ENCODE measurements at regions of chr6 and their contacts with region 1.

Region 1: DNA sequence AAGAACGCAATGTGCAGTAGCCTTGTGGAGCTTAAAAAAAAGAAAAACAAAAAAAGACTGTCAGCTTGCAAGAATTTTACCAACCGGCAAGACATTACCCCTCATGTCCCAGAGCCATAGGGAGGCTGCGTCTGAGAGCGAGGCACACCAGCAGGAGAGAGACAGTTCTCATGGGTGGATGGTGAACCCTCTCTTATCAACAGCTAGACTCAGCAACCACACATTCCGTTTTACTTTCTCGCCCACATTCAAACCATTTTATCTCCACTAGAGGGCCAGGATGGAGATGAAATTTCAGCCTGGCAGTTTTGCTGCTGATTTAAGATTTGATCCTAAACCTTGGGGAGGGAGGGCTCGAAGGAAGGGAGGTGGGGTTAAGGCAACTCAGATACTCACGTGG is 247.0 kb downstream of the ATXN1 start:
- DNase-seq: peak in 5 of 9 experiments; percentile 19 to 68 (median 26)
- ATAC-seq: peak; percentile 37
- H3K4me3 ChIP-seq: no peak overlapping the region
- H3K4me3 Mint-ChIP-seq: no peak overlapping the region
- H3K27ac ChIP-seq: no peak overlapping the region
- H3K27ac Mint-ChIP-seq: peak overlapping the region; percentile 73
- H3K4me1 ChIP-seq: peaks cover 43% of the 10 kb centered on the region
- H3K4me1 Mint-ChIP-seq: peaks cover 64% of the 10 kb centered on the region
- H3K27me3 ChIP-seq: no peaks in the 10 kb centered on the region
- H3K27me3 Mint-ChIP-seq: no peaks in the 10 kb centered on the region
- CTCF ChIP-seq: no peak

Region 2: DNA sequence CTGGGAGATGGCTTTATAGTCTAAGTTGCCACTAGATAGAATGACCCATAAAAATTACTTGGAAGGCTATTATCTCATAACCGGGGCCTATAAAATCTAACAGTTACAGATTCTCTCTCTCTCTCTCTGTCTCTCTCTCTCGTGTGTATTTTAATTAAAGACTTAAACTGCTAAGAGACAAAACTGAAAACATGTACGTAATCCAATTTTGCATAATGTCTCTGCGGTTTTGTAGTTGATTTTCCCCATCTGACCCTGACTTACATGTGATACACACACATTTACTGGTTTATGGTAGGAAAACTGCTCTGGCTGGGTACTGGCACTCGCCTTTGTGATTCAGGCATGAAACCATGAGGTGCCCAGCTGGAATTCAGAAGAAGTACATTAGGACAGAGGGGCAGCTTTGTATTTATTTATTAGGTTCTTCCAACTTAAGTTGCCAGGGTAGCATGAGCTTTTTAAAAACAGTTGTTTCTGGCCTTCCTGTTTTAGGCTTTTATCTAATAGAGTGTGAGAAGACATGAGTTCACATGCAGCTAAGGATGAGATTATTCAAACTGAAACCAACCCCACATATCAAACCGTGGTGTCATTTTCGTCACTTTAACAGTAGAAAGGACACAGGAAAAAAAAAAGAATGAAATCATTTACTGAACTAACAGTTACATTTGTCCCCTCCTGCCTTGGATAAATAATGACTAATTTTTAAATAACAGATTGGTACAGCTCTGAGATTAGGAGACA is 93.4 kb before region 1 on chr6:
- CTCF ChIA-PET with region 1: interaction called, 6 read pairs
- POLR2A ChIA-PET with region 1: no interaction called
- intact Hi-C with region 1: loop called in 1 of 2 experiments (anchors 5 kb)
- DNase-seq: peak in 6 of 9 experiments; percentile 15 to 89 (median 43)
- ATAC-seq: peak; percentile 77
- H3K4me3 ChIP-seq: peak overlapping the region in 1 of 2 experiments; percentile 3
- H3K4me3 Mint-ChIP-seq: peak overlapping the region; percentile 78
- H3K27ac ChIP-seq: peak overlapping the region; percentile 62 to 95
- H3K27ac Mint-ChIP-seq: peak overlapping the region; percentile 98
- H3K4me1 ChIP-seq: peaks cover 27% of the 10 kb centered on the region
- H3K4me1 Mint-ChIP-seq: peaks cover 42% of the 10 kb centered on the region
- H3K27me3 ChIP-seq: no peaks in the 10 kb centered on the region
- H3K27me3 Mint-ChIP-seq: no peaks in the 10 kb centered on the region
- CTCF ChIP-seq: no peak

Region 3: GRCh38 chr6:16438718-16439591 is 75.3 kb before region 1 on chr6:
- CTCF ChIA-PET with region 1: interaction called, 3 read pairs
- POLR2A ChIA-PET with region 1: no interaction called
- intact Hi-C with region 1: loop called in 1 of 2 experiments (anchors 5 kb)
- DNase-seq: peak in 2 of 9 experiments; percentile 52 to 65
- ATAC-seq: no peak
- H3K4me3 ChIP-seq: no peak overlapping the region
- H3K4me3 Mint-ChIP-seq: no peak overlapping the region
- H3K27ac ChIP-seq: peak overlapping the region in 1 of 2 experiments; percentile 67
- H3K27ac Mint-ChIP-seq: peak overlapping the region; percentile 47
- H3K4me1 ChIP-seq: peaks cover 28% of the 10 kb centered on the region
- H3K4me1 Mint-ChIP-seq: peaks cover 52% of the 10 kb centered on the region
- H3K27me3 ChIP-seq: no peaks in the 10 kb centered on the region
- H3K27me3 Mint-ChIP-seq: no peaks in the 10 kb centered on the region
- CTCF ChIP-seq: no peak

Region 4: DNA sequence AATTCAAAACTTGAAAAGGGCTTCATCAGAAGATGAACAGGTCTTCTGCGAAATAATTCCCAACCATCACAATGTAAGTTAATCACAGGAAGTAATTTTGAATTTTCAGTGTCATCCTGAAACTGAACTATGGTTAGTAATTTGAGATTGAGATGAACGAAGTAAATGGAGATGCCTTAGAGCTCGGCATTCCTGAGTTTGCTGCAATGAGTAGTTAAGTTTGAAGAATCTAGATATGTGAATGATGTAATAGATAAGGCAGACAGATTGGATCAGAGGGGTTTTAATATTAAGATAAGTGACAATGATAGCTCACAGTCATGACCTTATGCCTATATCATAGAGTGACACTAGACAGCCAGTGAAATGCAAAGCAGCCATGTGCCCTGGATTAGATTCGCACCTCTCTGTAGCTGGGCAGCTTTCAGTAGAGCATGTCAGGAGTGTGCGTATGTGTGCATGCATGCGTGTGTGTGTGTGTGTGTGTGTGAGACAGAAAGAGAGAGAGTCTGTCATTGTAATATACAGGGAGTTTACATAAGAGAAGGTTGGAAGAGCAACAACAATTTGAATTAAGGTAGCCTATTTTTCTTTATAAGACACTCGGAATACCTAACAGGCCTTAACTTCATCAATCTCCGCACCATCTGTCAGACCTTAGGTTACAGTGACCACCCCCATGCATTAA is 42.9 kb before region 1 on chr6:
- CTCF ChIA-PET with region 1: interaction called, 16 read pairs
- POLR2A ChIA-PET with region 1: no interaction called
- intact Hi-C with region 1: loop called (anchors 5 kb)
- DNase-seq: peak in 3 of 9 experiments; percentile 33 to 59 (median 35)
- ATAC-seq: no peak
- H3K4me3 ChIP-seq: no peak overlapping the region
- H3K4me3 Mint-ChIP-seq: no peak overlapping the region
- H3K27ac ChIP-seq: no peak overlapping the region
- H3K27ac Mint-ChIP-seq: peak overlapping the region; percentile 69
- H3K4me1 ChIP-seq: peaks cover 22% of the 10 kb centered on the region
- H3K4me1 Mint-ChIP-seq: peaks cover 55% of the 10 kb centered on the region
- H3K27me3 ChIP-seq: no peaks in the 10 kb centered on the region
- H3K27me3 Mint-ChIP-seq: no peaks in the 10 kb centered on the region
- CTCF ChIP-seq: no peak

Region 5: GRCh38 chr6:16487996-16488674 is 26.1 kb before region 1 on chr6:
- CTCF ChIA-PET with region 1: interaction called, 7 read pairs
- POLR2A ChIA-PET with region 1: interaction called, 3 read pairs
- intact Hi-C with region 1: loop called in 1 of 2 experiments (anchors 2 kb)
- DNase-seq: peak in 2 of 9 experiments; percentile 48 to 72
- ATAC-seq: peak; percentile 43
- H3K4me3 ChIP-seq: no peak overlapping the region
- H3K4me3 Mint-ChIP-seq: peak overlapping the region; percentile 66
- H3K27ac ChIP-seq: peak overlapping the region in 1 of 2 experiments; percentile 65
- H3K27ac Mint-ChIP-seq: peak overlapping the region; percentile 90
- H3K4me1 ChIP-seq: peaks cover 63% of the 10 kb centered on the region
- H3K4me1 Mint-ChIP-seq: peaks cover 79% of the 10 kb centered on the region
- H3K27me3 ChIP-seq: no peaks in the 10 kb centered on the region
- H3K27me3 Mint-ChIP-seq: no peaks in the 10 kb centered on the region
- CTCF ChIP-seq: no peak

Region 6: DNA sequence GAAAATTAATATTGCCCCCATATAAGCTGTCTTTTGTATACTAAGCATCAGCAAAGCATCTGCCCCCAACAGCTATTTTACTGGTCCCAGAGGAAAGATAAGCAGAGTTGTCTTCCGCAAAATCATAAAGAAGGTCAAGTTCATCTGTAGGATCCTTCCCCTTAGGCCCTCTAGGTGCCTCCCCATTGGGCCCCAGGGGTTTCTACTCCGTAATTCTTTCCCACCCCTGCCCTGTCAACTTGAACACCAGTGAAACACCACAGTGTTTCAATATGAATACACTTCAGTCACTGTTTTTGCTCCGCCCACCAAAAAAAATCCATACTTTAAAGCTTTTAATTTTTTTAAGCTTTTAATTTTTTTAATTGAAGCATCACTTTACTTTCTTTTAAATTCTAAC is 87.8 kb after region 1 on chr6:
- CTCF ChIA-PET with region 1: no interaction called
- POLR2A ChIA-PET with region 1: no interaction called
- intact Hi-C with region 1: no loop called
- DNase-seq: no peak
- ATAC-seq: no peak
- H3K4me3 ChIP-seq: no peak overlapping the region
- H3K4me3 Mint-ChIP-seq: no peak overlapping the region
- H3K27ac ChIP-seq: no peak overlapping the region
- H3K27ac Mint-ChIP-seq: no peak overlapping the region
- H3K4me1 ChIP-seq: peaks cover 19% of the 10 kb centered on the region
- H3K4me1 Mint-ChIP-seq: peaks cover 31% of the 10 kb centered on the region
- H3K27me3 ChIP-seq: no peaks in the 10 kb centered on the region
- H3K27me3 Mint-ChIP-seq: no peaks in the 10 kb centered on the region
- CTCF ChIP-seq: no peak

Region 7: GRCh38 chr6:16712931-16713484 is 198.8 kb after region 1 on chr6:
- CTCF ChIA-PET with region 1: no interaction called
- POLR2A ChIA-PET with region 1: no interaction called
- intact Hi-C with region 1: loop called in 1 of 2 experiments (anchors 10 kb)
- DNase-seq: peak in 2 of 9 experiments; percentile 48 to 62
- ATAC-seq: peak; percentile 28
- H3K4me3 ChIP-seq: no peak overlapping the region
- H3K4me3 Mint-ChIP-seq: peak overlapping the region; percentile 66
- H3K27ac ChIP-seq: peak overlapping the region; percentile 1 to 80
- H3K27ac Mint-ChIP-seq: peak overlapping the region; percentile 86
- H3K4me1 ChIP-seq: peaks cover 5% of the 10 kb centered on the region
- H3K4me1 Mint-ChIP-seq: peaks cover 38% of the 10 kb centered on the region
- H3K27me3 ChIP-seq: no peaks in the 10 kb centered on the region
- H3K27me3 Mint-ChIP-seq: no peaks in the 10 kb centered on the region
- CTCF ChIP-seq: no peak

Region 8: GRCh38 chr6:16964553-16965501 is 450.6 kb after region 1 on chr6:
- CTCF ChIA-PET with region 1: no interaction called
- POLR2A ChIA-PET with region 1: no interaction called
- intact Hi-C with region 1: loop called (anchors 10 kb)
- DNase-seq: peak; percentile 34 to 72 (median 59)
- ATAC-seq: peak; percentile 92
- H3K4me3 ChIP-seq: no peak overlapping the region
- H3K4me3 Mint-ChIP-seq: no peak overlapping the region
- H3K27ac ChIP-seq: no peak overlapping the region
- H3K27ac Mint-ChIP-seq: no peak overlapping the region
- H3K4me1 ChIP-seq: peaks cover 4% of the 10 kb centered on the region
- H3K4me1 Mint-ChIP-seq: peaks cover 6% of the 10 kb centered on the region
- H3K27me3 ChIP-seq: no peaks in the 10 kb centered on the region
- H3K27me3 Mint-ChIP-seq: peaks cover 14% of the 10 kb centered on the region
- CTCF ChIP-seq: peak; percentile 67